ENCODE measurements at regions of chr6 and their contacts with region 1.

Region 1: DNA sequence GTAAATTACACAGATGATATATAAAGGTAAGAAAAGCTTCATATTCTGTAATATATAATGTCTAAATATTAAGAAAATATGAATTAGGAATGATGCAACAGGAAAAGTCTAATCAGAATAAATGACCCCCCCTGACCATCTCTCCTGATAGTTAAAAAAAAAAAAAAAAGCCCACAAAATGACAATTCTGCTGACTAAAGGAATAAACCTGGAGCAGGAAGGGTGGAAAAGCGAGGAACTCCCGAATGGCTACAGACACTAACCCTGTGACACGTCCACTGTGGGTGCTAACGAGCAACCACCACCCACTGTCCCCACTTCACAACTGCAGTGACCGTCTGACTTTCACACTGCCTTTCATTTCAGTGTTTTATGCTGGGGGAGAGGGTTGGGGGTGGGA is 67.6 kb upstream of the FOXQ1 start:
- DNase-seq: no peak
- ATAC-seq: no peak
- H3K4me3 ChIP-seq: no peak overlapping the region
- H3K27ac ChIP-seq: no peak overlapping the region
- H3K4me1 ChIP-seq: no peaks in the 10 kb centered on the region
- H3K27me3 ChIP-seq: peaks cover 84% of the 10 kb centered on the region
- CTCF ChIP-seq: no peak

Region 2: GRCh38 chr6:971981-972640 is 272.2 kb before region 1 on chr6:
- CTCF ChIA-PET with region 1: no interaction called
- POLR2A ChIA-PET with region 1: interaction called, 23 read pairs
- intact Hi-C with region 1: no loop called
- DNase-seq: no peak
- ATAC-seq: no peak
- H3K4me3 ChIP-seq: no peak overlapping the region
- H3K27ac ChIP-seq: no peak overlapping the region
- H3K4me1 ChIP-seq: no peaks in the 10 kb centered on the region
- H3K27me3 ChIP-seq: peaks cover 40% of the 10 kb centered on the region
- CTCF ChIP-seq: no peak

Region 3: DNA sequence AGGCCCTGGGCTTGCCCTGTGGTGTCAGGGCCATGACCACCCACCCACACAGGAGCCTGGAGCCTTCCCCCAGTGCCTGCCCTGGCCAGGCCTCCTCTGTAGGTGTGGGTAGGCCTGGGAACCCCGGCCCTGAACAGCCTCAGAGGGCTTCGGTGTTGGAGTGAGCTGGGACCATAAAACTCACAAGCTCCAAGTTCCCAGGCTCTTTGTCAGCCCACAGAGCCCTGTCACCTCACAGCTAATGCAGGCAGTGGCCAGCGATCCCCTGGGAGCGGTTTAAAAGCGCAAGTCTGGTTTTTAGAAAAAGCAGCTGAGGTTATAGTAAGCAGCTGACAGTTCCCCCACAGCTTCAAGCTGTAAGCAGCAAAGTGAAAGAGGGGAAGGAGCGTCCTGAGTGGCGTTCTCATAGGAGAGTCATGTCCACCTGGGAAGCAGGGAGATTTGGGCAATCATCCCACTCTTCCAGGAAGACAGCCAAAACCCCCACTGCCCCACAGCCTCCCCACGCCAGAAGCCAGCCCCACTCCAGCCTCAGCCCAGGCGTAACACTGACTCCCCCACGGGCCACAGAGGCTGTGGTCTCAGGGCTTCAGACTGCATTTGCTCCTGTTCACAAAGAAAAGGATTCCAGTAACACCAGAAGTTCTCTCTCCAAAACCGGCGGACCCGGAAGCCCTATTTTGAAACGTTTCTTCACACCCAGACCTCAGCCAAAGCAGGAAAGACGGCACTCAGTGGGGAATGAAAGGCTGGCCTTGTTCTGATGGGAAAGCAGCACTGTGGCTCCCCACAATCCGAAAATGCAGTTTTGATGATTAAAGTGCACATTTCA is 331.1 kb after region 1 on chr6:
- CTCF ChIA-PET with region 1: no interaction called
- POLR2A ChIA-PET with region 1: no interaction called
- intact Hi-C with region 1: no loop called
- DNase-seq: no peak
- ATAC-seq: no peak
- H3K4me3 ChIP-seq: no peak overlapping the region
- H3K27ac ChIP-seq: no peak overlapping the region
- H3K4me1 ChIP-seq: no peaks in the 10 kb centered on the region
- H3K27me3 ChIP-seq: peaks cover 9% of the 10 kb centered on the region; the same call in 1 of the 2 replicates
- CTCF ChIP-seq: no peak